ENCODE measurements at regions of chr6 and their contacts with region 1.

Region 1: DNA sequence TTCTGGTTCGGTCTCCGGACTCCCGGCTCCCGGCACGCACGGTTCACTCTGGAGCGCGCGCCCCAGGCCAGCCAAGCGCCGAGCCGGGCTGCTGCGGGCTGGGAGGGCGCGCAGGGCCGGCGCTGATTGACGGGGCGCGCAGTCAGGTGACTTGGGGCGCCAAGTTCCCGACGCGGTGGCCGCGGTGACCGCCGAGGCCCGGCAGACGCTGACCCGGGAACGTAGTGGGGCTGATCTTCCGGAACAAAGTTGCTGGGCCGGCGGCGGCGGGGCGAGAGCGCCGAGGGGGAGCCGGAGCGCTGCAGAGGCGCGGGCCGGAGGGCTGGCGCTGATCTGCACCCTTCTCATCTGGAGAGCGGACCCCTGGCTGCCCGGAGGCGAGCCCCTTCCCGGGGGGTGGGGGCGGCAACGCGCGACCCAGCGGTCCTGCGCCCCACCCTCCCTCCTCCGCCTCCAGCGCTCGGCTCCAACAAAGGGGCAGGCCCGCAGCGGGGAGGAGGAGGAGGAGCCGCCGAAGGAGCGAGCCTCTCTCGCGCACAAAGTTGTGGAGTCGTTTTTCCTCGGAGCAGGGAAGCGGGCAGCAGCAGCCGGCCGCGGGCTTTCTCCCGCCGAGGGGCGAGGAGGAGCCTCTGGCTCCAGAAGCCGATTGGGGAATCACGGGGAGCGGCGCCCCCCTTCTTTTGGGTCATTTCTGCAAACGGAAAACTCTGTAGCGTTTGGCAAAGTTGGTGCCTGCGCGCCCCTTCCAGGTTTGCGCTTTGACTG is at the start of gene UTRN:
- DNase-seq: peak; percentile 87
- H3K4me3 ChIP-seq: peak within 1 kb of the TSS; percentile 71
- H3K4me3 Mint-ChIP-seq: peak within 1 kb of the TSS; percentile 81
- H3K27ac Mint-ChIP-seq: peak within 1 kb of the TSS; percentile 95
- H3K4me1 ChIP-seq: peaks cover 7% of the 10 kb centered on the region; the same call in 1 of the 2 replicates
- H3K4me1 Mint-ChIP-seq: peaks cover 20% of the 10 kb centered on the region
- H3K27me3 ChIP-seq: no peaks in the 10 kb centered on the region
- H3K27me3 Mint-ChIP-seq: no peaks in the 10 kb centered on the region
- CTCF ChIP-seq: no peak
- total RNA-seq, gene UTRN: 216 and 233 TPM in 2 replicates

Region 2: GRCh38 chr6:144095331-144096002 is 189.5 kb before region 1 on chr6 and contains the start of gene SF3B5:
- CTCF ChIA-PET with region 1: no interaction called
- POLR2A ChIA-PET with region 1: no interaction called
- intact Hi-C with region 1: loop called (anchors 5 kb)
- DNase-seq: peak; percentile 97 to 99
- H3K4me3 ChIP-seq: peak within 1 kb of the TSS; percentile 74
- H3K4me3 Mint-ChIP-seq: peak within 1 kb of the TSS; percentile 87
- H3K27ac Mint-ChIP-seq: peak within 1 kb of the TSS; percentile 94
- H3K4me1 ChIP-seq: peaks cover 4% of the 10 kb centered on the region; the same call in 1 of the 2 replicates
- H3K4me1 Mint-ChIP-seq: peaks cover 9% of the 10 kb centered on the region
- H3K27me3 ChIP-seq: no peaks in the 10 kb centered on the region
- H3K27me3 Mint-ChIP-seq: no peaks in the 10 kb centered on the region
- CTCF ChIP-seq: no peak
- total RNA-seq, gene SF3B5: 84.6 and 95.4 TPM in 2 replicates

Region 3: DNA sequence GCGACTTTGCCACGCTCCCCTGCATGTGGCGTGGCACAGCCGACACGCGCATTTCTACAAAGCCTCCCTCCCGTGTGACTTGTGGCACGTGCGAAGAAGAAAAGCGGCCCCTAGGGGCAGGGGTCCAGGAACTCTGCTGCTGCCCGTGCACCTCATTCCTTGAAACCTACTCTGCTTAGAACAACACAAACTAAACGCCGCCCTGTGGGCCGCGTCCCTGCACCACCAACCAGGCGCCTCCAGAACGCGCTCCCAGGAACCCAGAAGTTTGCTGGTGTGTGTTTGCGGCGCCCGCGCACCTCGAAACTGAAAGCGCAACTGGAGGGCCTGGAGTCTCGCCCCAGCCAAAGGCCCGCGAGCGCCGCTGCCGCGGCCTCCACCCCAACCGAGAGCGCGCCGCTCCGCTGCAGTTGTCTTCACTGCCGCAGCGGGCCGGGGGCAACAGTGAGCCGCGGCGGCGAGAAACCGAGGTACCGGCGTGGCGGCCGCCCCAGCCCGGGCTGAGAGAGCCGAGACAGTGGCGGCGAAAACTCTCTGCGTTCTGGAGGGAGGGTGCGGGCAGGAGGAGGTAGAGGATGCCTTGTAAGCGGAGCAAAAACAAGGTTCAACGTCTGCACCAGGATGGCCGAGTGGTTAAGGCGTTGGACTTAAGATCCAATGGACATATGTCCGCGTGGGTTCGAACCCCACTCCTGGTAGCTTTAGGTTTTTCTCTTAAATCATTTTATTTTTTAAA is 68.9 kb before region 1 on chr6:
- CTCF ChIA-PET with region 1: interaction called, 10 read pairs
- POLR2A ChIA-PET with region 1: interaction called, 4 read pairs
- intact Hi-C with region 1: loop called (anchors 1 kb)
- DNase-seq: peak; percentile 95 to 96
- H3K4me3 ChIP-seq: peak overlapping the region; percentile 70
- H3K4me3 Mint-ChIP-seq: peak overlapping the region; percentile 86
- H3K27ac Mint-ChIP-seq: peak overlapping the region; percentile 90
- H3K4me1 ChIP-seq: peaks cover 7% of the 10 kb centered on the region
- H3K4me1 Mint-ChIP-seq: peaks cover 34% of the 10 kb centered on the region
- H3K27me3 ChIP-seq: no peaks in the 10 kb centered on the region
- H3K27me3 Mint-ChIP-seq: peaks cover 6% of the 10 kb centered on the region
- CTCF ChIP-seq: peak; percentile 57 to 77

Region 4: DNA sequence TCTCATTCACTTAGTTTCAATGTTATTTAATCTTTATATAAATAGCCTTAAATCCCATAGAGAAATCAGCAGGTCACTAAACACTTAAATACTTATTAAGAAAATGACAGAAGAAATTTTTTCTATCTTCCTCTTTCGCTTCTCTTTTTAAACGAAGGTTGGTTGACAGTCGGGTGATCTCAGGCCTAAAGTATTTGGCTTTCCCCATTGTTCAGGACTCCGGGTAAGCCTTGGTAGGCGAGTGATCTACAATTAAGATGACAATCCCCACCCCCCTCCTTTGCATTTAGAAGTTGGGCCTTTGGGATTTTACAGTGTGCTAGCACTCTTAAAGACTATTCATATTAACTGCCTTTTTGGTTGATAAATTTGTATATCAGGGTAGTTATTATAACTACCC is 19.6 kb before region 1 on chr6:
- CTCF ChIA-PET with region 1: interaction called, 15 read pairs
- POLR2A ChIA-PET with region 1: interaction called, 6 read pairs
- intact Hi-C with region 1: loop called (anchors 1 kb)
- DNase-seq: peak; percentile 61 to 73
- H3K4me3 ChIP-seq: no peak overlapping the region; the same call in 1 of the 2 replicates
- H3K4me3 Mint-ChIP-seq: peak overlapping the region; percentile 68
- H3K27ac Mint-ChIP-seq: peak overlapping the region; percentile 97
- H3K4me1 ChIP-seq: peaks cover 59% of the 10 kb centered on the region
- H3K4me1 Mint-ChIP-seq: peaks cover 22% of the 10 kb centered on the region
- H3K27me3 ChIP-seq: no peaks in the 10 kb centered on the region
- H3K27me3 Mint-ChIP-seq: no peaks in the 10 kb centered on the region
- CTCF ChIP-seq: no peak

Region 5: GRCh38 chr6:144305567-144305966 is 20.6 kb after region 1 on chr6:
- CTCF ChIA-PET with region 1: interaction called, 5 read pairs
- POLR2A ChIA-PET with region 1: no interaction called
- intact Hi-C with region 1: loop called (anchors 2 kb)
- DNase-seq: no peak
- H3K4me3 ChIP-seq: no peak overlapping the region
- H3K4me3 Mint-ChIP-seq: no peak overlapping the region
- H3K27ac Mint-ChIP-seq: no peak overlapping the region
- H3K4me1 ChIP-seq: peaks cover 51% of the 10 kb centered on the region
- H3K4me1 Mint-ChIP-seq: peaks cover 62% of the 10 kb centered on the region
- H3K27me3 ChIP-seq: no peaks in the 10 kb centered on the region
- H3K27me3 Mint-ChIP-seq: no peaks in the 10 kb centered on the region
- CTCF ChIP-seq: no peak

Region 6: GRCh38 chr6:144423167-144423566 is 138.2 kb after region 1 on chr6:
- CTCF ChIA-PET with region 1: no interaction called
- POLR2A ChIA-PET with region 1: no interaction called
- intact Hi-C with region 1: loop called (anchors 2 kb)
- DNase-seq: no peak
- H3K4me3 ChIP-seq: no peak overlapping the region
- H3K4me3 Mint-ChIP-seq: no peak overlapping the region
- H3K27ac Mint-ChIP-seq: no peak overlapping the region
- H3K4me1 ChIP-seq: peaks cover 4% of the 10 kb centered on the region; the same call in 1 of the 2 replicates
- H3K4me1 Mint-ChIP-seq: no peaks in the 10 kb centered on the region
- H3K27me3 ChIP-seq: no peaks in the 10 kb centered on the region
- H3K27me3 Mint-ChIP-seq: no peaks in the 10 kb centered on the region
- CTCF ChIP-seq: no peak

Measured in Caco-2 (cell line).